ENCODE measurements at regions of chr7 and their contacts with region 1.

Region 1: DNA sequence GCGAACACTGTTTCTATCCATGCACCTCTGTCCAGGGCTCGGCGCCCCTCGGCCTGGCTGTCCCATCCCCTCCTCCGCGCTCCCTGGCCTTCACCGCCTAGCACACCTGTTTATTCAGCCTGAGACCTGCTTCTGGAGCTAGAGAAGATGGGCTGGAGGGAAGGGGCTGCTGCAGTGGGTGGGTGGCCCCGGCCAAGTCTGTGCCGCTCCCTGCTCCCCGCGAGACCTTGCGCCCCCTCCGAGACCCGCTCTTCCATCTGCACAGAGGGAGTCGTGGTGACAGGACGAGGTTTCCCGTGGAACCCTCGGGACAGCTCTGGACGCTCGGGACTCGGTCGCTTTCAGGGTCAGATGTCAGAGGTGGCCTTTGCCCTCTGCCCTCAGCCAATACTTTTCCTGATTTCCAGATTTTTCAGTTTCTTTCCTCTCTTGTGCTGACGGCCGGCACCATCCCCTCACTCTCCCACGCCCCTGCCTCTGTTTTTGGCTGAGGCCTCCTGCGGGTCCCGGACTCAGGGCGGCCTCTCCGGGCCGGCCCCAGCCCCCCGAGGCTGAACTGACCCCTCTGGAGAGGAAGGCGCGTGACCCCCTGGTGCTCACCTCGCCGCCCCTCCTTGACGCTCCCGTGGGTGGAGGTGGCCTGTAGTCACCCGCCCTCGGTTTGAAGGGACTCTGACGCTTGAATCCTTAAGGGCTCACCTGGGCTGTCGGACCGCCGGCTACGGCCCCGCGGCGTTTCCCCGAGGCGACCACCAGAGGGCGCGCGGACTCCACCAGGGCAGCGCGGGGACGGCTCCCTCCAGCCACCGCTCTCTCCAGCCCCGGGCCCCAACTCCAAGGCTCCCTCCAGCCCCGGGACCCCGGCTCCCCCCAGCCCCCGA is 15.6 kb downstream of the SHH start:
- DNase-seq: no peak
- ATAC-seq: peak; percentile 88
- H3K4me3 ChIP-seq: peak overlapping the region in 1 of 2 experiments; percentile 27; a peak in 1 of 4 replicates
- H3K27ac ChIP-seq: no peak overlapping the region
- H3K4me1 ChIP-seq: no peaks in the 10 kb centered on the region; the same call in 1 of the 2 replicates
- H3K27me3 ChIP-seq: no peaks in the 10 kb centered on the region
- CTCF ChIP-seq: peak; percentile 96

Region 2: GRCh38 chr7:156473476-156474240 is 677.0 kb after region 1 on chr7:
- CTCF ChIA-PET with region 1: no interaction called
- POLR2A ChIA-PET with region 1: interaction called, 3 read pairs
- in situ Hi-C with region 1: no loop called
- intact Hi-C with region 1: loop called (anchors 5 kb)
- DNase-seq: peak; percentile 46
- ATAC-seq: peak; percentile 82
- H3K4me3 ChIP-seq: no peak overlapping the region
- H3K27ac ChIP-seq: no peak overlapping the region
- H3K4me1 ChIP-seq: no peaks in the 10 kb centered on the region; the same call in 1 of the 2 replicates
- H3K27me3 ChIP-seq: no peaks in the 10 kb centered on the region
- CTCF ChIP-seq: peak; percentile 91

Region 3: DNA sequence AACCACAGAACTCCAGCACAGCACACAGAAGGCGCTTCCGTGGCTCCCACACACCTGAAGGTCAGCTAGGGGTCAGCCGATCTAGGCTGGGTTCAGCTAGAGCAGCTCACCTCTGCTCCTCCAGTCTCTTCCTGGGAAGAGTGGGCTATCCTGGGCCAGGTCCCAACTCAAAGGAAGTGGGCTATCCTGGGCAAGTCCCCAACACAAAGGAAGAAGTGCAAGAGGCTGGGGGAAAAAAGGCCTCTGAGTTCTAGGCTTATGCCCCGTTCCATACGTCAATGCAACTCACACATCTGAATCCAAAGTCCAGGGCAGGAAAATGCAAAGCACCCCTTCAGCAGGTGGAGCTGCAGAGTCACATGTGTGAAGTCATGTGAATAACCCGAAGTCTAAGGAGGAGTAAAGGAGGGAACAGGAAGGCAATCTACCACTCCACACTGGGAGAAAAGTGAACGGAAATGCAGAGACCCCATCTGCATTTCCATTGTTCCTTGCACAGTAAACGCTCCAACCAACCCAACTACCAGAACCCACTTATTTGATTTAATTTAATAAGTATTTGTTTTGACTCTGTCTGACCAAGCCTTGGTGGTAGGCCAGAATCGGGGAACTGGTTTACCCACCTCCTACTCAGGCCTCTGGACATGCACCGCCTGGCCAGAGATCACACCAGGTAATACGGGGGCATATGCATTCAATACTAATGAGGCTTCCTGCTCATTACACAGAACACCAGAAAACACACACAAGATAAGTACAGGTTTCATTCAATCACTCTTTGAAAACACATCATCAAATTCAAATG is 748.5 kb after region 1 on chr7:
- CTCF ChIA-PET with region 1: interaction called, 11 read pairs
- POLR2A ChIA-PET with region 1: no interaction called
- in situ Hi-C with region 1: no loop called
- intact Hi-C with region 1: no loop called
- DNase-seq: no peak
- ATAC-seq: peak; percentile 56; the same call in 1 of the 2 replicates
- H3K4me3 ChIP-seq: no peak overlapping the region
- H3K27ac ChIP-seq: no peak overlapping the region
- H3K4me1 ChIP-seq: no peaks in the 10 kb centered on the region
- H3K27me3 ChIP-seq: no peaks in the 10 kb centered on the region
- CTCF ChIP-seq: no peak

Region 4: DNA sequence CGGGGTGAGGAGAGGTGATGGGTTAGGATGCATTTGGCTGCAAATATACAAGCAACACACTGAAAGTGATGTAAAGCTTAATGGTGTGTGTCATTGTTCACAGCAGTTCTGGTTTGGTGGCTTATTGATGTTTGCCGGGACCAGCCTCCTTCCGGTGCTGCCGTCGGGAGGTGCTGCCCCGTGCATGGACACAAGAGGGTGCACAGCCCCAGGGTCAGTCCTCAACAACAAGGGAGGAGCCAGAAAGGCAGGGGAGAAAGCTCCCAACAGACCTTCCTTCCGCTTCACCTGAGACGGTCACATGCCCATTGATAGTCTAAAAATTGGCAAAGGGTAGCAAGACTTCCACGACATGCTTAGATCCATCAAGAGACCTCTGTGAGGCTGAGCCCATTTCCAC is 853.4 kb after region 1 on chr7:
- CTCF ChIA-PET with region 1: no interaction called
- POLR2A ChIA-PET with region 1: no interaction called
- in situ Hi-C with region 1: no loop called
- intact Hi-C with region 1: loop called (anchors 5 kb)
- DNase-seq: no peak
- ATAC-seq: peak; percentile 86
- H3K4me3 ChIP-seq: no peak overlapping the region
- H3K27ac ChIP-seq: no peak overlapping the region
- H3K4me1 ChIP-seq: no peaks in the 10 kb centered on the region
- H3K27me3 ChIP-seq: no peaks in the 10 kb centered on the region
- CTCF ChIP-seq: peak; percentile 67

Region 5: DNA sequence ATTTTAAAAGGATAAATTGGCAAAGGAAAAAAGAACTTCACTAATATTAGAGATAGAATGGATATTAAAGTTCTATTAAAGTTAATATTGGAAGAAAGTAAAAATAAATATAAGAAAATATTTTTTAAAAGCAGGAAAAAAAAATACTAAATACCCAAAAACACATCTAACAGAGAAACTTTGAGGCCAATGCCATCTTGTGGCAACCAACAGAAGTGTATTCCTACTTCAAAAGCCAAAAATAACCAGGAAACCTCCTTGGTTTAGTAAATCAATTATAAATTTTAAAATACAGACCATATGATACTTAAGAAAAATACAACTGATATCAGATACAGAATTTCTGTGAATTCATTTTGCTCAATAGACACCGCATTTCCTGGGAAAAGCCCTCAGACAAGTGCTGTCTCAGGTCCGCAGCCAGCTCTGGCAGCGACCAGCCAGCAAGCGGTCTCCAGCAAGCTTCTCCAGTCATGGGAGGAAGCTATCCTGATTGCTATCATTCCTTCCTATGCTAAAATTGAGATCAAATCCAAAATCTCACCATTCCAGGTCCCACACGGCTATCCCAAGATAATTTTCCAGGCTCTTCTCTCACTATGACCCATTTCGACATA is 1031.1 kb after region 1 on chr7:
- CTCF ChIA-PET with region 1: no interaction called
- POLR2A ChIA-PET with region 1: no interaction called
- in situ Hi-C with region 1: no loop called
- intact Hi-C with region 1: loop called (anchors 5 kb)
- DNase-seq: no peak
- ATAC-seq: no peak
- H3K4me3 ChIP-seq: no peak overlapping the region
- H3K27ac ChIP-seq: no peak overlapping the region
- H3K4me1 ChIP-seq: no peaks in the 10 kb centered on the region
- H3K27me3 ChIP-seq: no peaks in the 10 kb centered on the region
- CTCF ChIP-seq: peak; percentile 55

Measured in Panc1 (cell line).